CD8-positive, alpha-beta T cell (primary cell): ENCODE measurements at regions of chr16 and their contacts with region 1.

Region 1: GRCh38 chr16:50313596-50314478 is 47.5 kb downstream of the ADCY7 start:
- DNase-seq: peak in 8 of 9 experiments; percentile 21 to 76 (median 56)
- ATAC-seq: peak; percentile 70
- H3K4me3 ChIP-seq: no peak overlapping the region
- H3K4me3 Mint-ChIP-seq: no peak overlapping the region
- H3K27ac ChIP-seq: peak overlapping the region in 1 of 2 experiments; percentile 51
- H3K27ac Mint-ChIP-seq: peak overlapping the region; percentile 84
- H3K4me1 ChIP-seq: peaks cover 22% of the 10 kb centered on the region
- H3K4me1 Mint-ChIP-seq: peaks cover 24% of the 10 kb centered on the region
- H3K27me3 ChIP-seq: no peaks in the 10 kb centered on the region
- H3K27me3 Mint-ChIP-seq: no peaks in the 10 kb centered on the region
- CTCF ChIP-seq: no peak

Region 2: GRCh38 chr16:50215680-50216079 is 98.2 kb before region 1 on chr16:
- CTCF ChIA-PET with region 1: interaction called, 3 read pairs
- POLR2A ChIA-PET with region 1: no interaction called
- intact Hi-C with region 1: loop called in 1 of 2 experiments (anchors 5 kb)
- DNase-seq: no peak
- ATAC-seq: no peak
- H3K4me3 ChIP-seq: no peak overlapping the region
- H3K4me3 Mint-ChIP-seq: no peak overlapping the region
- H3K27ac ChIP-seq: peak overlapping the region in 1 of 2 experiments; percentile 3
- H3K27ac Mint-ChIP-seq: no peak overlapping the region
- H3K4me1 ChIP-seq: no peaks in the 10 kb centered on the region
- H3K4me1 Mint-ChIP-seq: peaks cover 16% of the 10 kb centered on the region
- H3K27me3 ChIP-seq: no peaks in the 10 kb centered on the region
- H3K27me3 Mint-ChIP-seq: no peaks in the 10 kb centered on the region
- CTCF ChIP-seq: no peak

Region 3: GRCh38 chr16:50381679-50382440 is 68.0 kb after region 1 on chr16:
- CTCF ChIA-PET with region 1: no interaction called
- POLR2A ChIA-PET with region 1: no interaction called
- intact Hi-C with region 1: no loop called
- DNase-seq: no peak
- ATAC-seq: no peak
- H3K4me3 ChIP-seq: no peak overlapping the region
- H3K4me3 Mint-ChIP-seq: no peak overlapping the region
- H3K27ac ChIP-seq: no peak overlapping the region
- H3K27ac Mint-ChIP-seq: no peak overlapping the region
- H3K4me1 ChIP-seq: no peaks in the 10 kb centered on the region
- H3K4me1 Mint-ChIP-seq: no peaks in the 10 kb centered on the region
- H3K27me3 ChIP-seq: no peaks in the 10 kb centered on the region
- H3K27me3 Mint-ChIP-seq: peaks cover 4% of the 10 kb centered on the region
- CTCF ChIP-seq: no peak

Region 4: DNA sequence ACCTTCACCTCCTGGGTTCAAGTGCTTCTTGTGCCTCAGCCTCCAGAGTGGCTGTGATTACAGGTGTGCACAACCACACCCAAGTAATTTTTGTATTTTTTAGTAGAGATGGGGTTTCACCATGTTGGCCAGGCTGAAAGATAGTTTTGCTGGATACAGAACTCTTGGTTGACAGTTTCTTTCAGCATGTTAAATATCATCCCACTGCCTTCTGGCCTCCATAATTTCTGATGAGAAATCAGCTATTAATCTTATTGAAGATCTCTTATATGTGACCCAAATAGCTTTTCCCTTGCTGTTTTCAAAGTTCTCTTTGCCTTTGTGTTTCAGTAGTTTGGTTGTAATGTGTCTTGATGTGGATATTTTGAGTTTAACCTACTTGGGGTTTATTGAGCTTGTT is 105.3 kb after region 1 on chr16:
- CTCF ChIA-PET with region 1: no interaction called
- POLR2A ChIA-PET with region 1: no interaction called
- intact Hi-C with region 1: no loop called
- DNase-seq: no peak
- ATAC-seq: no peak
- H3K4me3 ChIP-seq: no peak overlapping the region
- H3K4me3 Mint-ChIP-seq: no peak overlapping the region
- H3K27ac ChIP-seq: no peak overlapping the region
- H3K27ac Mint-ChIP-seq: no peak overlapping the region
- H3K4me1 ChIP-seq: no peaks in the 10 kb centered on the region
- H3K4me1 Mint-ChIP-seq: no peaks in the 10 kb centered on the region
- H3K27me3 ChIP-seq: peaks cover 0 to 2% of the 10 kb centered on the region in 2 experiments
- H3K27me3 Mint-ChIP-seq: no peaks in the 10 kb centered on the region
- CTCF ChIP-seq: no peak